WTC11 (cell line): ENCODE measurements at regions of chr19 and their contacts with region 1.

Region 1: DNA sequence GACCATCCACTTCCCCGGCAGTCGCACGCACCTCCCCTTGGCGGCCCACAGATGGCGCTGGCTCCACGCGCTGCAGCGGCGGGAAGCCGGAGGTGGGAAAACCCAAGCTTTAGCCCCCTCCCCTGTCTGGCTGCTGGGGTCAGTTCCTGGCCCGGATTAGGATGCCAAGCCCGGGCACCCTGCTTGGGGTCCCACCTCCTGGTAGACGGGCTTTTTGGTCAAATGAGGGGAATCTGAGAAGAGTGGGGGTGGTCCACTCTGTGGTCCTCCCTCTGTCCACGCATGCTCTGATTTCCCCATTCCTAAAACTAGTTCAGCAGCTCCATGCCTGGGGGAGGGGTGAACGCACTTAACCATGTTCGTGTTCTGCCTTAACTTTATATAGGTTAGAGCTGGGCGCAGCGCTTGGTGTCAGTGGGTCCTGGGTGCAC is 8.1 kb upstream of the ADGRE2 start:
- DNase-seq: peak; percentile 78
- ATAC-seq: peak; percentile 94
- H3K4me3 Mint-ChIP-seq: peak overlapping the region; percentile 53
- H3K27ac Mint-ChIP-seq: peak overlapping the region; percentile 70; the same call in 1 of the 2 replicates
- H3K4me1 Mint-ChIP-seq: peaks cover 10% of the 10 kb centered on the region
- H3K27me3 Mint-ChIP-seq: 0 out of 2 replicates have a peak, but pooled peaks cover 4% of the 10 kb centered on the region
- CTCF ChIP-seq: peak; percentile 84

Region 2: DNA sequence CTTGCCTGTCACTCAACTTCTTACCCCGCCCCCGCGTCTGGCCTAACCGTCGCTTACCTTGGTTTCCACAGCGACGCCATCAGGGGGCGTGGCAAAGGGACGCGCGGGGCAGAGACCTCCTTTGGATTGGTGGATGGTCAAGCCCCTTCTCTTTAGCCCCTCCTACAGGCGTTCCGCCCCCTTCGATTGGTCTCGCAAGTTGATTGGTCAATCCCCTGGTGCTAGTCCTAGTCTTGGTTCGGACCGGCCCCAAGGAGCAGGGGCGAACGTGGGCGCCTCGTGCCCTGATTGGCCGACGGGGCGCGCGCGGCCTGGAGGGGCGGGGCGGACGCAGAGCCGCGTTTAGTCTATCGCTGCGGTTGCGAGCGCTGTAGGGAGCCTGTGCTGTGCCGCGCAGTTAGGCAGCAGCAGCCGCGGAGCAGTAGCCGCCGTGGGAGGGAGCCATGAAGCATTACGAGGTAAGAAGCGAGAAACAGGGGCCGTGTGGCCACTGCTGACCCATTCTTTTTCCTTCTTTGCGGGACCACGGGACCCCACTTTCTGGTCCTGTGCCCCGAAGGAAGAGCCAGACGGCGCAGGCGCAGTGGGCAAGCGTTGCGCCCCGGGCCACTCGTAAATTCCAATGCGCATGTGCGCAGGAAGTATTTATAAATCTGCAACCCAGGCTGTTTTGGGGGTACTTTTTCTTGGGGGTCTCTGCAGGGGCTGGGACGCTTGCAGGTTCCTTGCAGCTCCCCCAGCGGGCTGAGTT is 257.0 kb before region 1 on chr19 and contains the start of gene TECR:
- CTCF ChIA-PET with region 1: no interaction called
- POLR2A ChIA-PET with region 1: no interaction called
- DNase-seq: peak; percentile 100
- ATAC-seq: peak; percentile 98
- H3K4me3 Mint-ChIP-seq: peak within 1 kb of the TSS; percentile 90
- H3K27ac Mint-ChIP-seq: peak within 1 kb of the TSS; percentile 91
- H3K4me1 Mint-ChIP-seq: peaks cover 12% of the 10 kb centered on the region
- H3K27me3 Mint-ChIP-seq: no peaks in the 10 kb centered on the region
- CTCF ChIP-seq: no peak
- total RNA-seq, gene TECR: 161 to 198 TPM (median 197 TPM) in 3 replicates

Region 3: GRCh38 chr19:14689598-14690503 is 96.6 kb before region 1 on chr19 and contains the start of gene ZNF333:
- CTCF ChIA-PET with region 1: interaction called, 10 read pairs
- POLR2A ChIA-PET with region 1: no interaction called
- DNase-seq: peak; percentile 100
- ATAC-seq: peak; percentile 92
- H3K4me3 Mint-ChIP-seq: peak within 1 kb of the TSS; percentile 84
- H3K27ac Mint-ChIP-seq: peak within 1 kb of the TSS; percentile 98
- H3K4me1 Mint-ChIP-seq: peaks cover 11% of the 10 kb centered on the region
- H3K27me3 Mint-ChIP-seq: peaks cover 4% of the 10 kb centered on the region; the same call in 1 of the 2 replicates
- CTCF ChIP-seq: no peak
- total RNA-seq, gene ZNF333: 13.5 to 16.2 TPM (median 14.8 TPM) in 3 replicates

Region 4: GRCh38 chr19:14775869-14776586 is 10.4 kb before region 1 on chr19:
- CTCF ChIA-PET with region 1: interaction called, 24 read pairs
- POLR2A ChIA-PET with region 1: interaction called, 4 read pairs
- DNase-seq: peak; percentile 36
- ATAC-seq: peak; percentile 10; the same call in 1 of the 2 replicates
- H3K4me3 Mint-ChIP-seq: peak overlapping the region; percentile 90
- H3K27ac Mint-ChIP-seq: no peak overlapping the region
- H3K4me1 Mint-ChIP-seq: peaks cover 7% of the 10 kb centered on the region
- H3K27me3 Mint-ChIP-seq: peaks cover 7% of the 10 kb centered on the region; the same call in 1 of the 2 replicates
- CTCF ChIP-seq: no peak

Region 5: DNA sequence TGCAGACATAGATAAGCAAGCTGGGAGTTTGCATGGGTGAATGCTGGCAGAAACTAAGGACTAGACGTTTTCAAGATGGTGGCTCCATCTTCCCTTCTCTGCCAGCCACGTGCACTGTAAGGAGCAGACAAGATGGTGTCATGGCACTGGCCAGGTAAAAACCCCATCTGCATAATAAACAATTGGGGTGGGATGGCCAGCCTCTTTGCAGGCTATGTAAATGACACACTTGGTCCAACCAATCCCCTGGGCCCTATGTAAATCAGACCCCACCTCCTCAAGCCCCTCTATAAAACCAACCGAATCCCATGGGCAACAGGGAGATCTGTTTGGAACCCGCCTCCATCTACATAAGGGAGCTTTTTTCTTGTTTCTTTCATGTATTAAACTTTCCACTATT is 51.0 kb after region 1 on chr19:
- CTCF ChIA-PET with region 1: interaction called, 10 read pairs
- POLR2A ChIA-PET with region 1: no interaction called
- DNase-seq: no peak
- ATAC-seq: peak; percentile 59
- H3K4me3 Mint-ChIP-seq: no peak overlapping the region
- H3K27ac Mint-ChIP-seq: no peak overlapping the region
- H3K4me1 Mint-ChIP-seq: peaks cover 13% of the 10 kb centered on the region
- H3K27me3 Mint-ChIP-seq: peaks cover 11% of the 10 kb centered on the region
- CTCF ChIP-seq: no peak

Region 6: GRCh38 chr19:14890643-14891379 is 104.4 kb after region 1 on chr19:
- CTCF ChIA-PET with region 1: interaction called, 36 read pairs
- POLR2A ChIA-PET with region 1: interaction called, 4 read pairs
- DNase-seq: no peak
- ATAC-seq: no peak
- H3K4me3 Mint-ChIP-seq: no peak overlapping the region
- H3K27ac Mint-ChIP-seq: no peak overlapping the region
- H3K4me1 Mint-ChIP-seq: 0 out of 2 replicates have a peak, but pooled peaks cover 5% of the 10 kb centered on the region
- H3K27me3 Mint-ChIP-seq: peaks cover 10% of the 10 kb centered on the region
- CTCF ChIP-seq: no peak

Region 7: GRCh38 chr19:15022752-15023151 is 236.3 kb after region 1 on chr19:
- CTCF ChIA-PET with region 1: interaction called, 11 read pairs
- POLR2A ChIA-PET with region 1: no interaction called
- DNase-seq: peak; percentile 21
- ATAC-seq: peak; percentile 46
- H3K4me3 Mint-ChIP-seq: no peak overlapping the region
- H3K27ac Mint-ChIP-seq: no peak overlapping the region
- H3K4me1 Mint-ChIP-seq: no peaks in the 10 kb centered on the region
- H3K27me3 Mint-ChIP-seq: peaks cover 23% of the 10 kb centered on the region
- CTCF ChIP-seq: no peak